Caco-2 (cell line): ENCODE measurements at regions of chr5 and their contacts with region 1.

Region 1: GRCh38 chr5:175464074-175464941 is 14.1 kb upstream of the SFXN1 start:
- DNase-seq: peak; percentile 74 to 82
- H3K4me3 ChIP-seq: no peak overlapping the region
- H3K4me3 Mint-ChIP-seq: peak overlapping the region; percentile 49
- H3K27ac Mint-ChIP-seq: no peak overlapping the region
- H3K4me1 ChIP-seq: peaks cover 14% of the 10 kb centered on the region
- H3K4me1 Mint-ChIP-seq: peaks cover 18% of the 10 kb centered on the region
- H3K27me3 ChIP-seq: no peaks in the 10 kb centered on the region
- H3K27me3 Mint-ChIP-seq: no peaks in the 10 kb centered on the region
- CTCF ChIP-seq: peak; percentile 80 to 83

Region 2: GRCh38 chr5:174951146-174951780 is 513.0 kb before region 1 on chr5:
- CTCF ChIA-PET with region 1: interaction called, 7 read pairs
- POLR2A ChIA-PET with region 1: no interaction called
- intact Hi-C with region 1: loop called (anchors 1 kb)
- DNase-seq: peak; percentile 73 to 74
- H3K4me3 ChIP-seq: no peak overlapping the region
- H3K4me3 Mint-ChIP-seq: no peak overlapping the region
- H3K27ac Mint-ChIP-seq: no peak overlapping the region
- H3K4me1 ChIP-seq: no peaks in the 10 kb centered on the region
- H3K4me1 Mint-ChIP-seq: no peaks in the 10 kb centered on the region
- H3K27me3 ChIP-seq: no peaks in the 10 kb centered on the region
- H3K27me3 Mint-ChIP-seq: peaks cover 5% of the 10 kb centered on the region
- CTCF ChIP-seq: peak; percentile 79 to 92

Region 3: DNA sequence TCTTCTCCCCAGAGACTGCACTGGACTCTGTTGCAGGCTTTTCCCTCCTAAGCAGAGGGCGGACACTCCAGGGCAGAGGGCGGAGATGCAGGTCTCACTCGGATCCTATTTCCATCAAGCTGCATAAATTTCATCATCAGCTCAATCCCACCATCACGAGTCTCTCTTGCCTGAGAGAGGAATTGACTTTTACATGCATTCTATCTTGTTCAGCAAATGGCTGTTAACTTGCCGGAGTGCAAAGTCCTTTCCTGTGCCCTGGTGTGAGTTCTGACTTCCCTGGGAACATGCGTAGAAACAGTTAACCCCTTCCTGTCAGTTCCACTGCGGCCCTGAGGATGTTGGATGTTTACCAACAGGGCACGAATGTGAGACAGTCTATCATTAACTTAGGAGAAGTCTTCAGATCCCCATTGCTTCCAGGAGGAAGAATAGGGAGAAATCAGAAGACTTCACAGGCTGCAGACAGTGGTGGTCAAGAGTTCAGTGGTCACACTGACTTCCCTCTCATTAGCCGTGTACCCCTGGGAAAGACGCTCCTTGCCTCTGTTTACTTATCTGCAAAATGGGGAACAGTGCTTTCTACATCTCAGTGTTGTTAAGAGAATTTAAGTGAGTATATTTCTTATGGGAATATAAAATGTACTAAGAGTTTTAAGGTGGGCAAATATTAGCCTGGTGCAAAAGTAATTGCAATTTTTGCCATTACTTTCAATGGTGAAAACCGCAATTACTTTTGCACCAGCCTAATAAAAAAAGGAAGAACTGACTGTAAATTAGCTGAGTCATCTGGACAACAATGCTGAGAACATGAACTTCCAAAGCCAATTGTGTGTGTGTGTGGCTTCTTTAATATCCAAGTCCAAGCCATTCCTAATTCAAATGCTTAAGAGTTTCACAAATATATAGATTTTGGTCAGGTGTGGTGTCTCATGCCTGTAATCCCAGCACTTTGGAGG is 268.3 kb before region 1 on chr5:
- CTCF ChIA-PET with region 1: interaction called, 4 read pairs
- POLR2A ChIA-PET with region 1: no interaction called
- intact Hi-C with region 1: loop called (anchors 5 kb)
- DNase-seq: peak; percentile 77 to 79
- H3K4me3 ChIP-seq: no peak overlapping the region
- H3K4me3 Mint-ChIP-seq: peak overlapping the region; percentile 48
- H3K27ac Mint-ChIP-seq: peak overlapping the region; percentile 59
- H3K4me1 ChIP-seq: peaks cover 19% of the 10 kb centered on the region
- H3K4me1 Mint-ChIP-seq: peaks cover 22% of the 10 kb centered on the region
- H3K27me3 ChIP-seq: no peaks in the 10 kb centered on the region
- H3K27me3 Mint-ChIP-seq: no peaks in the 10 kb centered on the region
- CTCF ChIP-seq: no peak

Region 4: DNA sequence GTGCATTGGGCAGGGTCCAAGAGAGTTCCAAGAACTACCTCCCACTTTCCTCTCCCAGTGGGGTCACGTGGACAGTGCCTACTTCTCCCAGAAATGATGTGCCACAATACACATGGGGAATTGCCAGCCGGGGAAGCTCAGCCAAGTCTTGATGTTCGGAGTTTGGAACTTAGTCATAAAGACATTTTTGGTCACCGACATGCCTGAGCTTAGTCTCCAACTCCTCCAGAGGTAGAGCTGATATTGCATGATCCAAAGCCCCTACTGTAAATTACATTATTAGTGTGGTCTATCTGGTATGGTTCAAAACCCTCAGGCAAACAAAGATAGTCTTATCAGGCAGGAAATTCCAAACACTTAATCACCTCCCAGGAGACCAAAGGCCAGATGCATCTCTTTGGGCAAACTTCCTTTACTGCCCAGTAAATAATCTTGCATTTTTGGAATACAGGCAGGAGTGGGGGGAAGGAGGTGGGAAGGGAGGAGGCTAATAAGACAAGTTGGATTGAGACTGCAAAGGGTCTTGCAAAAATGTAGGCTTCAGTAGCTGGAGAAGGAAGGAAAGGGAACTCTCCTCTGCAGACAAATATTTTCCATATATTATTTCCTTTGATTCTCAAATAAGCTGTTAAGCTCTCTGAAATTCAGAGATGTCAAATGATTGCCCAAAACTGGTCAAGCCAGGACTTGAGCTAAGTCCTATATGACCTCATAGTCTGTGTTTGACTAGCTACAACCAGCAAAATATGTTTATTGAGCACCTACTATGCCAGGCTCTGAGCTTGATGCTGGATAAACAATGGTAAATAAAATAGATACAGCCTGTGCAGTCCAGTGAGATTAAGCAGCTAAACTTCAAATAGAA is 119.7 kb before region 1 on chr5:
- CTCF ChIA-PET with region 1: no interaction called
- POLR2A ChIA-PET with region 1: no interaction called
- intact Hi-C with region 1: loop called (anchors 10 kb)
- DNase-seq: peak; percentile 68 to 75
- H3K4me3 ChIP-seq: no peak overlapping the region
- H3K4me3 Mint-ChIP-seq: no peak overlapping the region
- H3K27ac Mint-ChIP-seq: peak overlapping the region; percentile 71
- H3K4me1 ChIP-seq: peaks cover 26% of the 10 kb centered on the region
- H3K4me1 Mint-ChIP-seq: peaks cover 40% of the 10 kb centered on the region
- H3K27me3 ChIP-seq: no peaks in the 10 kb centered on the region
- H3K27me3 Mint-ChIP-seq: no peaks in the 10 kb centered on the region
- CTCF ChIP-seq: no peak

Region 5: GRCh38 chr5:175452166-175452565 is 12.1 kb before region 1 on chr5:
- CTCF ChIA-PET with region 1: no interaction called
- POLR2A ChIA-PET with region 1: no interaction called
- intact Hi-C with region 1: no loop called
- DNase-seq: no peak
- H3K4me3 ChIP-seq: no peak overlapping the region
- H3K4me3 Mint-ChIP-seq: no peak overlapping the region
- H3K27ac Mint-ChIP-seq: no peak overlapping the region
- H3K4me1 ChIP-seq: peaks cover 16% of the 10 kb centered on the region
- H3K4me1 Mint-ChIP-seq: peaks cover 11% of the 10 kb centered on the region
- H3K27me3 ChIP-seq: no peaks in the 10 kb centered on the region
- H3K27me3 Mint-ChIP-seq: no peaks in the 10 kb centered on the region
- CTCF ChIP-seq: no peak